ENCODE measurements at regions of chr9 and their contacts with region 1.

Region 1: GRCh38 chr9:75909776-75910175 is 19.3 kb downstream of the PCSK5 start:
- DNase-seq: no peak
- ATAC-seq: no peak
- H3K4me3 ChIP-seq: no peak overlapping the region
- H3K4me3 Mint-ChIP-seq: no peak overlapping the region
- H3K27ac ChIP-seq: no peak overlapping the region
- H3K27ac Mint-ChIP-seq: no peak overlapping the region
- H3K4me1 ChIP-seq: no peaks in the 10 kb centered on the region
- H3K4me1 Mint-ChIP-seq: peaks cover 79% of the 10 kb centered on the region
- H3K27me3 ChIP-seq: no peaks in the 10 kb centered on the region
- H3K27me3 Mint-ChIP-seq: no peaks in the 10 kb centered on the region
- CTCF ChIP-seq: no peak

Region 2: GRCh38 chr9:75844321-75844720 is 65.5 kb before region 1 on chr9:
- CTCF ChIA-PET with region 1: no interaction called
- POLR2A ChIA-PET with region 1: no interaction called
- intact Hi-C with region 1: no loop called
- DNase-seq: no peak
- ATAC-seq: no peak
- H3K4me3 ChIP-seq: no peak overlapping the region
- H3K4me3 Mint-ChIP-seq: no peak overlapping the region
- H3K27ac ChIP-seq: no peak overlapping the region
- H3K27ac Mint-ChIP-seq: no peak overlapping the region
- H3K4me1 ChIP-seq: no peaks in the 10 kb centered on the region
- H3K4me1 Mint-ChIP-seq: no peaks in the 10 kb centered on the region
- H3K27me3 ChIP-seq: no peaks in the 10 kb centered on the region
- H3K27me3 Mint-ChIP-seq: peaks cover 5% of the 10 kb centered on the region
- CTCF ChIP-seq: no peak

Region 3: GRCh38 chr9:75866273-75866871 is 43.4 kb before region 1 on chr9:
- CTCF ChIA-PET with region 1: no interaction called
- POLR2A ChIA-PET with region 1: no interaction called
- intact Hi-C with region 1: no loop called
- DNase-seq: peak in 10 of 14 experiments; percentile 7 to 67 (median 31)
- ATAC-seq: no peak
- H3K4me3 ChIP-seq: no peak overlapping the region
- H3K4me3 Mint-ChIP-seq: no peak overlapping the region
- H3K27ac ChIP-seq: no peak overlapping the region
- H3K27ac Mint-ChIP-seq: no peak overlapping the region
- H3K4me1 ChIP-seq: no peaks in the 10 kb centered on the region
- H3K4me1 Mint-ChIP-seq: peaks cover 19% of the 10 kb centered on the region
- H3K27me3 ChIP-seq: no peaks in the 10 kb centered on the region
- H3K27me3 Mint-ChIP-seq: no peaks in the 10 kb centered on the region
- CTCF ChIP-seq: peak; percentile 83

Region 4: DNA sequence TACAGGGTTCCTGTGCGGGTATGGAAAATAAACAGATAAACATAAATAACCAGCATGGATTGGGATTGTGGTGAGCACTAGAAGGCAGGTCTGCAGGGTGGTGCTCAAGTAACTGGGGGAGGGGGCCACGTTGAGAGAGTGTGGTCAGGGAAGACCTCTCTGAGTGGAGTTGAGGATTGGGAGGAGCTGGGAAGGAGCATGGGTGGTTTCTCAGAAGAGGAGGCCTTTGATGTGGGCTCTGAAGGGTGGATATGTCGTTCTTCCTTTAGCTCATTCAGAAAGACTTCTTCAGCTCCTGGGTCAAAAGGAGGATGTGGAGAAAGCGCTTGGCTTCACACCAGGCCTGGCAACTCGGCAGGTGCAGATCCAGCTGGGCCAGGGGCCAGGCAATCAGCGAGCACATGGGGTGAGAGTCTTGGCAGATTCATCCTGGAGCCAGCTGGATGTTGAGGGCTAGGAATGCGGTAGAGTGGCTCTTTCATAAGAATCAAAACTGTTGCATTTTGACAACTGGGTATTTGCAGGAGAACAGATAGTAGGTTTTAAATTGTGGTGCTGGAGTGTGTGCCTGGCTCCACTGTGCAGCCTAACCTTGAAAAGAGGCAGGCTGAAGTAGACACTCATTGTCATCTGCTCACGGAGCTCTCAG is 52.4 kb after region 1 on chr9:
- CTCF ChIA-PET with region 1: no interaction called
- POLR2A ChIA-PET with region 1: no interaction called
- intact Hi-C with region 1: loop called in 1 of 2 experiments (anchors 10 kb)
- DNase-seq: no peak
- ATAC-seq: no peak
- H3K4me3 ChIP-seq: no peak overlapping the region
- H3K4me3 Mint-ChIP-seq: peak overlapping the region; percentile 55
- H3K27ac ChIP-seq: no peak overlapping the region
- H3K27ac Mint-ChIP-seq: peak overlapping the region; percentile 54
- H3K4me1 ChIP-seq: peaks cover 11% of the 10 kb centered on the region
- H3K4me1 Mint-ChIP-seq: peaks cover 71% of the 10 kb centered on the region
- H3K27me3 ChIP-seq: no peaks in the 10 kb centered on the region
- H3K27me3 Mint-ChIP-seq: no peaks in the 10 kb centered on the region
- CTCF ChIP-seq: no peak

Region 5: GRCh38 chr9:76405868-76406267 is 496.1 kb after region 1 on chr9:
- CTCF ChIA-PET with region 1: no interaction called
- POLR2A ChIA-PET with region 1: no interaction called
- intact Hi-C with region 1: no loop called
- DNase-seq: no peak
- ATAC-seq: no peak
- H3K4me3 ChIP-seq: no peak overlapping the region
- H3K4me3 Mint-ChIP-seq: no peak overlapping the region
- H3K27ac ChIP-seq: no peak overlapping the region
- H3K27ac Mint-ChIP-seq: no peak overlapping the region
- H3K4me1 ChIP-seq: no peaks in the 10 kb centered on the region
- H3K4me1 Mint-ChIP-seq: peaks cover 9% of the 10 kb centered on the region
- H3K27me3 ChIP-seq: no peaks in the 10 kb centered on the region
- H3K27me3 Mint-ChIP-seq: no peaks in the 10 kb centered on the region
- CTCF ChIP-seq: no peak